ENCODE measurements at regions of chrX and their contacts with region 1.

Region 1: GRCh38 chrX:9737363-9737762 is 28.3 kb downstream of the GPR143 start:
- DNase-seq: no peak
- ATAC-seq: no peak
- H3K4me3 ChIP-seq: no peak overlapping the region
- H3K27ac ChIP-seq: no peak overlapping the region
- H3K4me1 ChIP-seq: no peaks in the 10 kb centered on the region
- H3K27me3 ChIP-seq: peaks cover 0 to 18% (median 0%) of the 10 kb centered on the region in 7 donors
- CTCF ChIP-seq: no peak

Region 2: DNA sequence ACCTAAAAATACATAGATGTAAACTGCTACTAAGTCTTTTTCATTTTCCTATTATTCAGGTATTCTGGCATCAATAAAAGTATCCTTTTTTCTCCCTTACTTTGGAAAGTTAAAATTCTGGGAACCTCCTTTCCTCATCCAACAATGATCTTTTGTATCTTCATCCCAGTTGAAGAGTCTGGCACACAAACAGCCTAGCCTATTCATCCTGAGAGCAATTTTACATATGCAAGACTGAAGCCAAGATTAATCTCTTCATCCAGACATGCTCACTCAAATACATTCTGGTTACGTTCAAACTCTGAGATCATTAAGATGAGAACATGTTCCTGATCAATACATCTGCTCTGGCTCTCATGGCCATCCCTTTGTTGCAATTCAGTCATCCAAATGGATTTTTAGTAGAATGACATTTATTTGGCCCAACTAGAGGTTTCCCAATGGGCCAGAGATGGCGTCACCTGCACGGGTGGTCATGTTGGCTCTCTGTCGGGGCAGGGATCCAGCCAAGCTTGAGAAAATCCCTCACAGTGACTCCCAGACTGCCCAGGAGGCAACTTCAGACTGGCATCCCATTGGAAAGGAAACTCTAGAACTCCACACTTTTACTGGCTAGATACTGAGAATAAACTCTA is 1431.0 kb before region 1 on chrX:
- intact Hi-C with region 1: loop called in 1 of 10 experiments (anchors 5 kb)
- DNase-seq: no peak
- ATAC-seq: no peak
- H3K4me3 ChIP-seq: no peak overlapping the region
- H3K27ac ChIP-seq: no peak overlapping the region
- H3K4me1 ChIP-seq: no peaks in the 10 kb centered on the region
- H3K27me3 ChIP-seq: no peaks in the 10 kb centered on the region
- CTCF ChIP-seq: no peak

Measured in heart right ventricle (tissue), 16 donors.